ENCODE measurements at regions of chr3 and their contacts with region 1.

Region 1: DNA sequence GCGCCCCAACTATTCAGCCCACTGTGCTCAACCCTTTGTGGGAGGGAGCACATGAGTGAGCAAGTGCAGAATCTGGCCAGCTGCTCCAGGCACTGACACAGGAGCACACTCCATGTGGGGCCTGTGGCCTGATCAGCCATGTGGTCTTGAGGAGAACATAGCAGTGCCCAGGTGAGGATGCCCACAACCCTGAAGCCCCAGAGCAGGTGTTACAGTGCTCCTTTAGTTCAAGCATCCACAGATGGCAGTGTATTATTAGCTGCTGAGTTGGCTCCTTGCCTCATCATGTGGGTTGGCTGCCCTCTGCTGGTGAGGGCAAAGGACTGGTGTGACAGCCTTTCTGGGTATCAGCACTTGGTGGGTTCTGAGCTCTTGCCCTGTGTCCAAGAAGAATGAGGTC is 1588.2 kb downstream of the SI start:
- DNase-seq: no peak
- ATAC-seq: peak; percentile 100
- H3K4me3 ChIP-seq: no peak overlapping the region
- H3K27ac ChIP-seq: no peak overlapping the region
- H3K4me1 ChIP-seq: no peaks in the 10 kb centered on the region
- H3K27me3 ChIP-seq: no peaks in the 10 kb centered on the region
- CTCF ChIP-seq: peak; percentile 53 to 82 (median 78)
- EP300 ChIP-seq: no peak
- POLR2A ChIP-seq: no peak
- RAD21 ChIP-seq: peak; percentile 75

Region 2: GRCh38 chr3:163056874-163057497 is 433.1 kb before region 1 on chr3:
- CTCF ChIA-PET with region 1: interaction called, 19 read pairs
- POLR2A ChIA-PET with region 1: no interaction called
- RAD21 ChIA-PET with region 1: interaction called, 10 read pairs
- SMC1A ChIA-PET with region 1: interaction called, 14 read pairs
- in situ Hi-C with region 1: loop called (anchors 10 kb)
- intact Hi-C with region 1: loop called (anchors 1 kb)
- DNase-seq: no peak
- ATAC-seq: peak; percentile 76
- H3K4me3 ChIP-seq: no peak overlapping the region
- H3K27ac ChIP-seq: no peak overlapping the region
- H3K4me1 ChIP-seq: no peaks in the 10 kb centered on the region
- H3K27me3 ChIP-seq: no peaks in the 10 kb centered on the region
- CTCF ChIP-seq: peak; percentile 56 to 62 (median 61); a peak in 5 of 6 replicates
- EP300 ChIP-seq: no peak
- POLR2A ChIP-seq: no peak
- RAD21 ChIP-seq: peak; percentile 73

Region 3: GRCh38 chr3:163185721-163186350 is 304.3 kb before region 1 on chr3:
- CTCF ChIA-PET with region 1: no interaction called
- POLR2A ChIA-PET with region 1: no interaction called
- RAD21 ChIA-PET with region 1: no interaction called
- SMC1A ChIA-PET with region 1: no interaction called
- in situ Hi-C with region 1: no loop called
- intact Hi-C with region 1: no loop called
- DNase-seq: no peak
- ATAC-seq: no peak
- H3K4me3 ChIP-seq: no peak overlapping the region
- H3K27ac ChIP-seq: no peak overlapping the region
- H3K4me1 ChIP-seq: no peaks in the 10 kb centered on the region
- H3K27me3 ChIP-seq: no peaks in the 10 kb centered on the region
- CTCF ChIP-seq: no peak
- EP300 ChIP-seq: no peak
- POLR2A ChIP-seq: no peak
- RAD21 ChIP-seq: no peak

Region 4: DNA sequence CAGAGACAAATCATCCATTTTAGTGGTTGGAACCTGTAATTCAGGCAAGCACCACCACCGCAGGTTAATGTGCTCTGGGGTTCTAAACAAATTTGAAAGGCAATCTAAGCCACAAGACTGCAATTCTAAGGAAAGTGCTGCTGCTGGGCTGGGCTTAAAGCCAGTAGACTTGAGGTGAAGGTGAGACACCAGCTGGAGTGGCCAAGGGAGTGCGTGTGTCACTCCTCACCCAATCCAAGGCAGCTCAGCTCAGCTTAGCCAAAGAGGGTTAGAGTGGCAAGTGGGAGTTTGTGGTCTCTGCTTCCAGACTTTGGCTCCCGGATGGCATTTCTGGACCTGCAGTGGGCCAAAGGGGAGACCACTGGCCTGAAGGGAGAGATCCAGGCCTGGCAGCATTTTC is 67.4 kb before region 1 on chr3:
- CTCF ChIA-PET with region 1: no interaction called
- POLR2A ChIA-PET with region 1: no interaction called
- RAD21 ChIA-PET with region 1: no interaction called
- SMC1A ChIA-PET with region 1: no interaction called
- in situ Hi-C with region 1: no loop called
- intact Hi-C with region 1: no loop called
- DNase-seq: no peak
- ATAC-seq: no peak
- H3K4me3 ChIP-seq: no peak overlapping the region
- H3K27ac ChIP-seq: no peak overlapping the region
- H3K4me1 ChIP-seq: no peaks in the 10 kb centered on the region
- H3K27me3 ChIP-seq: no peaks in the 10 kb centered on the region
- CTCF ChIP-seq: no peak
- EP300 ChIP-seq: no peak
- POLR2A ChIP-seq: no peak
- RAD21 ChIP-seq: no peak

Region 5: DNA sequence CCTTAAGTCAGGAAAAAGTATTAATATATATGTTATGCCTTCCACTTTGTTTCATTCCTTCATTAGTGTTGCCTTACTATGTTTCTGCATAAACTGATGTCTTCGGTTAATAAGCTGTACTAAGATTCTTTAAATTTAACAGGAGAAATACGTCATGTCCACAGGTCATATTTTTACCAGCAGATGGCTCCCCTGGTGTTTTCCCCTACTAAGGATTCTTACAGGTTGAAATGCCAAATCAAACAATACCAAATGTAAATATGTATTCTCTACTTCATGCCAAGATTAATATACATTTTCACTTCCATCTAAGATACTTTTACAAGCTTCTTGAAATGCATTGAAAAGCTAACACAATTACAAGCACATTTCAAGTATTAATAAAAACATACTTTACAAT is 13.9 kb before region 1 on chr3:
- CTCF ChIA-PET with region 1: interaction called, 12 read pairs
- POLR2A ChIA-PET with region 1: no interaction called
- RAD21 ChIA-PET with region 1: interaction called, 3 read pairs
- SMC1A ChIA-PET with region 1: no interaction called
- in situ Hi-C with region 1: no loop called
- intact Hi-C with region 1: no loop called
- DNase-seq: no peak
- ATAC-seq: no peak
- H3K4me3 ChIP-seq: no peak overlapping the region
- H3K27ac ChIP-seq: no peak overlapping the region
- H3K4me1 ChIP-seq: no peaks in the 10 kb centered on the region
- H3K27me3 ChIP-seq: no peaks in the 10 kb centered on the region
- CTCF ChIP-seq: peak in 1 of 3 experiments; percentile 15; a peak in 1 of 6 replicates
- EP300 ChIP-seq: no peak
- POLR2A ChIP-seq: no peak
- RAD21 ChIP-seq: no peak

Measured in GM12878 (cell line).